Panc1 (cell line): ENCODE measurements at regions of chr12 and their contacts with region 1.

Region 1: GRCh38 chr12:122116707-122117535 is 38.4 kb downstream of the MLXIP start:
- DNase-seq: no peak
- ATAC-seq: peak; percentile 56
- H3K4me3 ChIP-seq: no peak overlapping the region
- H3K27ac ChIP-seq: peak overlapping the region; percentile 53
- H3K4me1 ChIP-seq: peaks cover 54% of the 10 kb centered on the region
- H3K27me3 ChIP-seq: no peaks in the 10 kb centered on the region
- CTCF ChIP-seq: no peak

Region 2: DNA sequence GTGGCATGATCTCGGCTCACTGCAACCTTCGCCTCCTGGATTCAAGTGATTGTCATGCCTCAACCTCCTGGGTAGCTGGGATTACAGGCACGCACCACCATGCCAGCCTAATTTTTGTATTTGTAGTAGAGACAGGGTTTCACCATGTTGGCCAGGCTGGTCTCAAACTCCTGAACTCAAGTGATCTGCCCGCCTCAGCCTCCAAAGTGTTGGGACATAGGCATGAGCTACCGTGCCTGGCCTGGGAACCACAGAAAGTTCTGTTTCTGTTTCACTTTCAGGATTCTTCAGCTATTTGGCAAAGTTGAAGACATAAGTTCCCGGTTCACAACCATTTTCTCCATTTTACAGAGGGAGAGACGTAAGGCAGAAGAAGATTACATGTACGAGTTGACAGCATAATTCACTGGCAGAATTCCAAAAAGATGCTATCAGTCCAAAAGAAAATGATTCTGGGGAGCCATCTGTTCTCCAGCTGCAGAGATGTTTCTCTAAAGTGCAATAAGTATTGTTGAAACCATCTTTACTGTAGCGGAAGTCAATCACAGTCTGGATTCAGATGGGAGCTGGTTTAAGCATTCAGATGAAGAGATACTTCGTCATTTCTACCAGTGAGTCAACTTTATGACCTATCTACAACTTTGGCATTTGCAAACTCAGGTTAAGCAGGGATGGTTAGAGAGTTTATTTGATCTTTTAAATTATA is 725.1 kb before region 1 on chr12:
- CTCF ChIA-PET with region 1: no interaction called
- POLR2A ChIA-PET with region 1: no interaction called
- in situ Hi-C with region 1: no loop called
- intact Hi-C with region 1: no loop called
- DNase-seq: no peak
- ATAC-seq: no peak
- H3K4me3 ChIP-seq: no peak overlapping the region
- H3K27ac ChIP-seq: no peak overlapping the region
- H3K4me1 ChIP-seq: no peaks in the 10 kb centered on the region
- H3K27me3 ChIP-seq: no peaks in the 10 kb centered on the region
- CTCF ChIP-seq: no peak

Region 3: GRCh38 chr12:122045262-122045661 is 71.7 kb before region 1 on chr12:
- CTCF ChIA-PET with region 1: interaction called, 17 read pairs
- POLR2A ChIA-PET with region 1: no interaction called
- in situ Hi-C with region 1: no loop called
- intact Hi-C with region 1: no loop called
- DNase-seq: no peak
- ATAC-seq: no peak
- H3K4me3 ChIP-seq: no peak overlapping the region
- H3K27ac ChIP-seq: no peak overlapping the region
- H3K4me1 ChIP-seq: no peaks in the 10 kb centered on the region
- H3K27me3 ChIP-seq: no peaks in the 10 kb centered on the region
- CTCF ChIP-seq: no peak

Region 4: GRCh38 chr12:122097927-122098756 is 18.8 kb before region 1 on chr12:
- CTCF ChIA-PET with region 1: interaction called, 5 read pairs
- POLR2A ChIA-PET with region 1: interaction called, 15 read pairs
- in situ Hi-C with region 1: no loop called
- intact Hi-C with region 1: no loop called
- DNase-seq: no peak
- ATAC-seq: peak; percentile 89
- H3K4me3 ChIP-seq: peak overlapping the region in 1 of 2 experiments; percentile 31; a peak in 2 of 4 replicates
- H3K27ac ChIP-seq: peak overlapping the region; percentile 96
- H3K4me1 ChIP-seq: peaks cover 66% of the 10 kb centered on the region
- H3K27me3 ChIP-seq: no peaks in the 10 kb centered on the region
- CTCF ChIP-seq: no peak